ENCODE measurements at regions of chr19 and their contacts with region 1.

Region 1: DNA sequence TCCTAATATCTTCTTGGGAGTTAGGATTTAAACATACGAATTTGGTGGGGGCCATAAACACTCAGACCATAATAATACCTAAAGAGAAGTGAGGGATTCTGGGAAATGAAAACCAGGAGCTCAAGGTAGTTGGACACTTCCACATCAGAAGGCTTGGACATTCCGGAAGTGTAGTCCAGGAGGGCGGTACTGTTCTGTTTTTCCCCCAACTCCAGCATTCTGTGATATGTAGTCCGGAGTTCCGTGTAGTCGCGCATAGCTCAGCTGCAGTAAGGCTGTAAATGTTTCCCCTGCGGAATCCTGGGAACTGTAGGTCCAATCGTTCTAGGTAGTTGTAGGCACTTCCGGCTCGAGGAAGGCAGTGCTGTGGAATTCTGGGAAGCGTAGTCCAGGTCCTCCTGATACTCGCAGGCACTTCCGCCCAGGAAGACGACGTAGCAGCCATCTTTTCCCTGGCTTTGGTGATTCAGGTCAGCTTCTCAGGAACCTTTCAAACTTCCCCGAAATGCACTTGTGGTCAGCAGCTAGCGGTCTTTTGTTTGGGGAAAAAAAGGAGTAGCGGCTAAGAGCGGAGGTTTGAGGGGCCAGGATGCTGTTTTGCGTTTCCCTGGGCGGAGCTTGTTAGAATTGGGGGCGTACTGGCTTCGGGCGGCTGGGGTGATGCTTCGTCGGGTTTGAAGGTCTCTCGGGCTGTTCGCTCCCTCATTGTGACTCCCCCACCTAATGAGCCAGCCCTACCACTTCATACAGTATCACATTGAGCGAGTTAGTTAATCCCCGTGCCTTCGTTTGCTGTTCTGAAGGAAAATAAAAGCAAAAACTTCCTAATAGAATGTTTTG is at the start of gene ZNF226:
- DNase-seq: peak; percentile 90
- H3K4me3 Mint-ChIP-seq: peak within 1 kb of the TSS; percentile 94
- H3K27ac Mint-ChIP-seq: peak within 1 kb of the TSS; percentile 93
- H3K4me1 Mint-ChIP-seq: peaks cover 27% of the 10 kb centered on the region
- H3K27me3 Mint-ChIP-seq: no peaks in the 10 kb centered on the region
- total RNA-seq, gene ZNF226: 12.4 to 16.9 TPM

Region 2: DNA sequence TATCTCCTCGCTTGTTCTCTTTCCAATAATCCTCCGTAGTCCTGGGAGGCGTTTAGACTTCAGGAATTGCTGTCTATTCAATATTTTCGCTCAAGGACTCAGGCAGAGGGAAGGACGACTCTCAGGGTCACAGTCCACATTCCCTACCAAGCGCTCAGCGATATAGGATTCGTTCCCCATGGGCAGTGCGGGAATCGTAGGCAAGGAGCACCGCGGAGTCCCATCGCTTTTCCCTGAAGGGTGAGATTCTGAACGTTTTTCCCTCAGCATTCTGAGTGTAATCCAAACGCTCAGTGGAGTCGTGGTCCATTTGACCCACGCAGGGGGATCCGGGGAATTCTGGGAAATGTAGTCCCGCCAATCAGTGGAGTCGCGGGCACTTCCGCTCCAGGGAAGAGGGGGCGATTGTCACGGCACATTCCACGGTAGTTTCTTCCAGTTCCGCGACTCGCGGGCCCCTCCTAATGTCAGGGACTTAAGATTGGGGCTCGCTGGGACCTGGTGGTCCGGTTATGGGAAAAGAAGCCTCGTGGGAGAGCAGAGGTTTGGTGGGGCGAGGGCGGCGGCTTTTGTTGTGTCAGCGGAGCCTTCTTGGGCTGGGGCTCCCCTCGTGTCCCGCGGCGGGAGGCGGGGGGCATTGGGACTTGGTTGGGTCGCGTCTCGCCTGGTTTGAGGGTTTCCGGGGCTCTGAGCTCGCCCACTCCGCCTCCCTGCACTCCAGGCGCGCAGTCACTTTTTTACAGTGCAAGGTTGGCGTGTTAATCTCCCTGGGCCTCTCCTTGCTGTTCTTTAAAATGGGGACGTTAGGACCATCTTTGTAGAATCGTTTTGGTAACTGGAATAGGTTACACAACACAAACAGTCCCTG is 23.5 kb before region 1 on chr19 and contains the start of gene ZNF234:
- CTCF ChIA-PET with region 1: no interaction called
- intact Hi-C with region 1: loop called (anchors 1 kb)
- DNase-seq: peak; percentile 72
- H3K4me3 Mint-ChIP-seq: peak within 1 kb of the TSS; percentile 92
- H3K27ac Mint-ChIP-seq: peak within 1 kb of the TSS; percentile 85
- H3K4me1 Mint-ChIP-seq: peaks cover 16% of the 10 kb centered on the region
- H3K27me3 Mint-ChIP-seq: no peaks in the 10 kb centered on the region
- total RNA-seq, gene ZNF234: 5.0 to 5.4 TPM

Region 3: DNA sequence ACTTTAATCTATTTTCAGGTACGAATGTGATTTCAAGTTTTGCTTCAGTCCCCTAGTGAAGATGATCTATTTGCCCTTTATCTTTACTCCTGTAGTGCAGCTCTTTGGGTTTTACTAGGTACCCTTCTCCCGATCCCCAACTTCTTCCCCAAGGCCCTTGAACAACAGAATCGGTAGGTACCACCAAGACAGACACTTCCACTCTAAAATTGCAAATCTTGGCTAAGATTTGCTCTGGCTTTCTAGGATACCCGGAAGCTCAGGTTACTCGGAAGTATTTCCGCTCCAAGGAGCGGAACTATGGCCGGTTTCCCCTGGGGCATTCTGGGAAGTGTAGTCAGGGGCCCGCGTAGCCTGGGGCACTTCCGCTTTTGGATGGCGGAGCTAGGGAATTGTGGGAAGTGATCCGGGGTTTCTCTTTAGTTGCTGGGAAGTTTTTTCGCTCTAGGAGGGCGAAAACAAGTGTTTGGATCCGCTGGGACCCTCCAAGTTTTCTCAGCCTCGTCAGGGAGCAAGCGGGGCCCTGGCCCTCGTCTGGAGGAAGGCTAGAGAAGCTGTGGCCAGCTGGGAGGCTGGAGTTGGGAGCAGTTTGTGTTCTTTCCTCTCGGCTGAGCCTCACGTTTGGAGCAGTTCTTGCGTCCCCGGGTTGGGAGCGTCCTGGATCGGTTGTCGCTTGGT is 42.4 kb after region 1 on chr19:
- CTCF ChIA-PET with region 1: no interaction called
- intact Hi-C with region 1: loop called (anchors 1 kb)
- DNase-seq: peak; percentile 87
- H3K4me3 Mint-ChIP-seq: peak overlapping the region; percentile 80
- H3K27ac Mint-ChIP-seq: peak overlapping the region; percentile 63
- H3K4me1 Mint-ChIP-seq: peaks cover 5% of the 10 kb centered on the region
- H3K27me3 Mint-ChIP-seq: peaks cover 3% of the 10 kb centered on the region